PC-9 (cell line): ENCODE measurements at regions of chr10 and their contacts with region 1.

Region 1: GRCh38 chr10:16843252-16843870 is 26.1 kb upstream of the RSU1 start:
- DNase-seq: peak in 1 of 2 experiments; percentile 58
- H3K4me3 ChIP-seq: no peak overlapping the region
- H3K27ac ChIP-seq: no peak overlapping the region
- H3K4me1 ChIP-seq: 0 out of 2 replicates have a peak, but pooled peaks cover 4% of the 10 kb centered on the region
- H3K27me3 ChIP-seq: no peaks in the 10 kb centered on the region
- CTCF ChIP-seq: peak; percentile 73

Region 2: DNA sequence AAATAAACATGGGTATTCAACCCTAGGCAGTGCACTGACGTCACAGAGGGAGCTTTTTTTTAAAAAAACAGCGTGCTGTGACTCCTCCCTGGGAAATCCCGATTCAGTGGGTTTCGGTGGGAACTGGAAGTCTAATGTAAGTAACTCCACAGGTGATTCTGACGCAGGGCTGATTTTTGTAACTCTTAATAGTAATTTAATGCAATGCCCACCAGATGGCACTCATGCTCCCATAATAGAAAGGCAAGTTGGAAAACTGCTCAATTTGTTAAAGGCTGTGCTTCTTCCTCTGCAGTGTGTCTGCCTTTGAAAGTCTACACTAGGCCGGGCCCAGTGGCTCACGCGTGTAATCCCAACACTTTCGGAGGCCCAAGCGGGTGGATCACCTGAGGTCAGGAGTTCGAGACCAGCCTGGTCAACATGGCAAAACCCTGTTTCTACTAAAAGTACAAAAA is 15.2 kb before region 1 on chr10:
- CTCF ChIA-PET with region 1: interaction called, 3 read pairs
- POLR2A ChIA-PET with region 1: no interaction called
- intact Hi-C with region 1: loop called (anchors 1 kb)
- DNase-seq: peak; percentile 50 to 52
- H3K4me3 ChIP-seq: no peak overlapping the region
- H3K27ac ChIP-seq: no peak overlapping the region
- H3K4me1 ChIP-seq: no peaks in the 10 kb centered on the region
- H3K27me3 ChIP-seq: no peaks in the 10 kb centered on the region
- CTCF ChIP-seq: peak; percentile 64

Region 3: GRCh38 chr10:17101257-17101909 is 258.0 kb after region 1 on chr10:
- CTCF ChIA-PET with region 1: no interaction called
- POLR2A ChIA-PET with region 1: no interaction called
- intact Hi-C with region 1: no loop called
- DNase-seq: peak in 1 of 2 experiments; percentile 24
- H3K4me3 ChIP-seq: no peak overlapping the region
- H3K27ac ChIP-seq: no peak overlapping the region
- H3K4me1 ChIP-seq: no peaks in the 10 kb centered on the region
- H3K27me3 ChIP-seq: no peaks in the 10 kb centered on the region
- CTCF ChIP-seq: no peak

Region 4: DNA sequence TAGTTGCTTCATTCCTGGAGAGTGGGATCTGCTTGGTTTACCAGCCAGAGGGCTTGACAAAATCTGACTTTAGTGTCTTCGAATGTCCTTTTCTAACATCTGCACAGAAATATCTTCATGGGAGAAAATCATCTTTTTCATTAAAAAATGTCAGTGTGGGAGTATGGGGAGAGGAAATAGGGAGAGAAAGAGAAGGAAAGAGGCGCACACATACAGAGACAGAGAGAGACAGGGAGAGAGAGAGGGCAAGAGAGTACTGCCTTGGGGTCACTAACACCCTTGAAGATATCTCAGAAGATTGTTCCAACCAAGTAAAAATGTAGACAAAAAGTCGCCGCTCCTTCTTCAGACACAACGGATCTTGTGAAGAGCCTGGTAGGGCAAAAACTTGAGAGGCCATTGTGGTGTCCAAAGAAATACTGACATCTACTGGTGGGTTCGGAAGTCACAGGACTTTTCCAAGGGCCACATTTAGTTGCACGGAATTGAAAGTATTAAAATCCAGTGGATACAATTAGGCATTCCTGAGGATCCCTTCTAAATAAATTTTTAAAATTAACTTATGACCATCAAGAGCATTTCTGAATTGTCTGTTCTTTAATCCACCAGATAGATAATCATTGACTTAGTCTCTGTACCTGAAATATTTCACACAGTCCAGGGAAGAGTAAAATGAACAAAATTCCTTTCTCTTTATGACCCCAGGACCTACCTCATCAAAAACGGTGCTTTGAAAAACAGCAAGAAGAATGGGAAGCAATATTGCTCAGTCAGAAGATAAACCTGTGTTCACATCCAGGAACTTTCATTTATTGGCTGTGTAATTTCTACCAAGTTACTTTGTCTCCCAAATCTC is 414.3 kb after region 1 on chr10:
- CTCF ChIA-PET with region 1: no interaction called
- POLR2A ChIA-PET with region 1: no interaction called
- intact Hi-C with region 1: loop called (anchors 1 kb)
- DNase-seq: peak in 1 of 2 experiments; percentile 47
- H3K4me3 ChIP-seq: no peak overlapping the region
- H3K27ac ChIP-seq: no peak overlapping the region
- H3K4me1 ChIP-seq: no peaks in the 10 kb centered on the region
- H3K27me3 ChIP-seq: no peaks in the 10 kb centered on the region
- CTCF ChIP-seq: peak; percentile 75

Region 5: DNA sequence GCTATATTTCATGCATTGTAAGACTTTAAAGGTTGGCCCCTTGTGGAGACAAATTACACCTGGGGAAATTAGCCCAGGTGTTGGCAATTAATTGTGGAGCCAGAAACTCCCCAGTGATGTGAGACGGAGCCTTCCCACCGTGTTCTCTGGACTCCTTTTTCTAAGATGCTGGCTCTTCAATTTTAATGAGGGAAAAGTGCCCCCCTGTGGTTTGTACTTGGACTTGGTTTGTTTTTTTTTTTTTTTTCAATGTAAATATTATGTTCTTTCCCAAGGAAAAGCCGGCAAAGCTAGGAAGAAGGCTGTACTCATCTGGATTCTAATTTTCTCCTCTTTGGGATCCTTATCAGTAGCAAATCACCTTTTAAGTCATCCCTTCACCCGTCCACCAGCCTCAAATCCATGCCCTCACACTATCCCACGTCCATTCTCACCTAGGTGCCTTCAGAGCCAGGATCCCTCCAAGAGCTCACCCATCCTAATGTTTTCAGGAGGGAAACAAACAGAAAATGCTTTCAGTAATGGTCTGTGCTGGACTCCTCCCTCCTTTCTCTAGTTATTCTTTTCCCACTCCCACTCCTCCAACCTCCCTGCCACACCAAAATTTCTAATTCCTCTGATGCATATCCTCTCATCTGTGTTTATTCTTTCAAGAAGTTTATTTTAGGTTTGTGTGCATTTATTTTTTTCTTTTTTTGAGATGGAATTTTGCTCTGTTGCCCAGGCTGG is 631.4 kb after region 1 on chr10:
- CTCF ChIA-PET with region 1: interaction called, 17 read pairs
- POLR2A ChIA-PET with region 1: no interaction called
- intact Hi-C with region 1: no loop called
- DNase-seq: no peak
- H3K4me3 ChIP-seq: no peak overlapping the region
- H3K27ac ChIP-seq: no peak overlapping the region
- H3K4me1 ChIP-seq: no peaks in the 10 kb centered on the region
- H3K27me3 ChIP-seq: no peaks in the 10 kb centered on the region
- CTCF ChIP-seq: no peak

Region 6: DNA sequence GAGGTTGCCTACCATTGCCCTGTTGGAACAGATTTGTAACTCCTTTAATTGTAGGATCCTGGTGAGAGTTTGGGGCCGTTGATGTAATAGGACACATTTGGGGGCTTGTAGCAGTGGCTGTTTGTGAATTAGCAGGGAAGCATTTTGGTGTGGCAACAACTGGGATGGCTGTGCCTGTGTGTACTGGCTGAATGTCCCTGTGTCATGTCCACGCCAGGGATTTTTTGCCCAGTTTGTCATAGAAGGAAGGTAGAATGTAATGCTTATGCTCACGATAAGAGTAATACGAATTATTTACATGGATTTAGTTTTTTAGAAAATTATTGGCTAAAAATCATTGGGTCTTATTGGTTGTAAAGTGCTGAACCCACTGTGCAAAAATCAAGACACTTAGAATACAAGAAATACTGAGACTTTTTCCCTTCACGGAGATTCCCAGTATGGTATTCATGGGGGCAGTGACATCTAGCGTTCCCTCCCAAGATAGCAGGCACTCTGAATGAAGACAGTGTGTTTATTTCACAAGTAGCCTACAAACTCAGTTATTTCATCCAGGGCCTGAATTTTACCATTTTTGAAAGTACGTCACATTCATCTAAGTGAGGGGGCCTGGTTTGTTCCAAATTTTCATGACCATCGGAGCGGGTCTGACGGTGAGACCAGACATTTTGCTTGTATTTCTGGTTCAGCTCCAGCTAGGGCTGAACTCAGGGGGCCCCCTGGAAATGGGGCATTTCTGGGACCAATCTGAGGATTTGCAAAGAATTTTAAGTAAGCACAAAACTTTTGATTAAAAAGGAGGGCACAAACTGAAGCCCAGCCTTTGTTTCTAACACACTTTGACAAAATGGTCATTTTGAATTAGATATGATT is 1371.6 kb after region 1 on chr10:
- CTCF ChIA-PET with region 1: no interaction called
- POLR2A ChIA-PET with region 1: no interaction called
- intact Hi-C with region 1: loop called (anchors 5 kb)
- DNase-seq: peak in 1 of 2 experiments; percentile 45
- H3K4me3 ChIP-seq: no peak overlapping the region
- H3K27ac ChIP-seq: no peak overlapping the region
- H3K4me1 ChIP-seq: no peaks in the 10 kb centered on the region
- H3K27me3 ChIP-seq: no peaks in the 10 kb centered on the region
- CTCF ChIP-seq: peak; percentile 72